ENCODE measurements at regions of chr18 and their contacts with region 1.

Region 1: GRCh38 chr18:38940863-38941531 is 1375.4 kb upstream of the CELF4 start:
- DNase-seq: peak; percentile 69
- H3K4me3 Mint-ChIP-seq: peak overlapping the region; percentile 72
- H3K27ac Mint-ChIP-seq: peak overlapping the region; percentile 91
- H3K4me1 Mint-ChIP-seq: peaks cover 28% of the 10 kb centered on the region
- H3K27me3 Mint-ChIP-seq: peaks cover 9% of the 10 kb centered on the region

Region 2: DNA sequence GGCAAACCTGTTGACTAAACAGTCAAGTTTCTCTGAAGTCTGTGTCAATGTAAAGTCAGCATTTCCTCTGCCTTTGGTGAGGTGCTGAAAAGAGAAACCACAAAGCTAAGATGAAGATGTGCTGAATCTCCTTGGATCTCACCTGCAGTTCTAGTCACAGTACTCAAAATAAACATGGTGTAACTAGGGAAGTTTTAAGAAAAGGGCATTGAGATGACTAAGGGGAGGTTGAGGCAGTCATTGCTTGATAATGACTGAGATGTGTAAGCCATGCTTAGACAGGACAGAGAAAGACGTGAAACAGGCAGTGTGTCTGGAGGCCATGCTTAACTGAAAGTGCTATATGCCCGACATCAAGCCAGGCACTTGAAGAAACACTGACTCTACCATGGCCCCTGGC is 365.3 kb before region 1 on chr18:
- intact Hi-C with region 1: loop called (anchors 1 kb)
- DNase-seq: peak; percentile 1
- H3K4me3 Mint-ChIP-seq: no peak overlapping the region
- H3K27ac Mint-ChIP-seq: peak overlapping the region; percentile 14
- H3K4me1 Mint-ChIP-seq: peaks cover 18% of the 10 kb centered on the region
- H3K27me3 Mint-ChIP-seq: no peaks in the 10 kb centered on the region

Region 3: DNA sequence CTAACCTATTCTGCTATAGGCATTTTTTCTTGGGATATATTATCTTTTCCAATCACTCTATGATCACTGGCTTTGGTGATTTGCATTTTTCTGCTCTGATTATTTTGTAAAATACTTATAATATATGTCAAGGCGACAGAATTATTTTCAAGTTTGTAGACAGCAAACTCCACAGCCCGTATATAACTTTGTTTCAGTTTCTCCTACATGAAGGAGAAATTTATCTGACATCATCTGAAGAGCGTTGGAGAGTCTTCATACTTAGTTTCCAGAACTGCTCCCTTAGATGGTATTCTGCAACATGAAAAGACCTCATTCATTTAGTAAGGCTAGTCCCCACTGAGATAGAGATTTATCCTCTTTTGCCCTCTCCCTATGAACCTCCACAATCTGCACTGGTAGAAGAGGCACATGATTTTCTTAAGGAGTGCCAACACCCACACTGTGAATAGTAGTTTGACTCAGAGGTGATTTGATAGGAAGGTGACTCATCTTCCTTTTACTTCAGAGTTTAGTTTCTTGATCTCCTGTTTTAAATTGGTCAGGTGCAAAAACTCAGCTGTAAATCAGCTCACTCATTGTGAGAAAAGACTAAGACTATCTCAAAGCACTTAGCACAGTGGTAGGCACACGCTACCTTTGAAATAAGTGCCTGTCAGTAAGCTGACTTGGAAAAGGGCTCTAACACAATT is 473.2 kb after region 1 on chr18:
- intact Hi-C with region 1: loop called (anchors 2 kb)
- DNase-seq: no peak
- H3K4me3 Mint-ChIP-seq: no peak overlapping the region
- H3K27ac Mint-ChIP-seq: peak overlapping the region; percentile 24
- H3K4me1 Mint-ChIP-seq: peaks cover 5% of the 10 kb centered on the region
- H3K27me3 Mint-ChIP-seq: no peaks in the 10 kb centered on the region

Measured in activated T-helper 1 cell treated with anti-CD3 and anti-CD28 coated beads, Interleukin-12 subunit alpha, Interleukin-12 subunit beta, Interleukin-2, Interleukin-4 antibody, amounts not matched to agents 30 ng/mL and 10 ng/mL and 1 ng/mL, durations not matched to agents 14 hours and 24 hours and 36 hours (primary cell).